Activated B cell treated with CpG ODN at 0.5 μM for 24 hours (primary cell): ENCODE measurements at regions of chr17 and their contacts with region 1.

Region 1: DNA sequence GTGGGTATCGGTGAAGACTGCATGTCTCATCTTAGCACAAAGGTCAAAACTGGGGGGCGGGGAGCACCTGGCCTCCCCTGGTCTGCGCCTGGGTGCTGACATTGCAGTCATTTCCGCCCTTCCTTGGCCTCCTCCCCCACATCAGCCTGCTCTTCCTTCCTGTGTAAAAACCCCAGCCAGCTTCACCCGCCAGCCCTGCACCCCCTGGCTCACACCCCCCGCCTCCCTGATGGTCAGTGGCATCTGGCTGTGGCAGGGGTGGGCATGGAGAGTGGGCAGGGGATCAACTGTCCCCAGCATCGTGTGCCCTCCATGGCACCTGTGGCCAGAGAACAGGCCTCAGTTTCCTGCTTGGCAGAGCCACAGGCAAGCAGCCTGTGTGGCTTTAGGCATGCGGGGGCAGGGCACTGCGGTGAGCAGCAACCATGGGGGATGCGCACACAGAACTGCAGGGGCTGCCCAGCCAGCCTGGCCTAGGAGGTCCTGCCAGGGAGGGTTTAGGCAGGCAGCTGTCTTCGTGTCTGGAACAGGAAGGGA is 26.5 kb upstream of the LASP1NB start:
- DNase-seq: peak; percentile 68
- ATAC-seq: peak; percentile 93
- H3K4me3 Mint-ChIP-seq: peak overlapping the region; percentile 55
- H3K27ac Mint-ChIP-seq: peak overlapping the region; percentile 93
- H3K4me1 Mint-ChIP-seq: peaks cover 42% of the 10 kb centered on the region
- H3K27me3 Mint-ChIP-seq: no peaks in the 10 kb centered on the region
- CTCF ChIP-seq: no peak

Region 2: DNA sequence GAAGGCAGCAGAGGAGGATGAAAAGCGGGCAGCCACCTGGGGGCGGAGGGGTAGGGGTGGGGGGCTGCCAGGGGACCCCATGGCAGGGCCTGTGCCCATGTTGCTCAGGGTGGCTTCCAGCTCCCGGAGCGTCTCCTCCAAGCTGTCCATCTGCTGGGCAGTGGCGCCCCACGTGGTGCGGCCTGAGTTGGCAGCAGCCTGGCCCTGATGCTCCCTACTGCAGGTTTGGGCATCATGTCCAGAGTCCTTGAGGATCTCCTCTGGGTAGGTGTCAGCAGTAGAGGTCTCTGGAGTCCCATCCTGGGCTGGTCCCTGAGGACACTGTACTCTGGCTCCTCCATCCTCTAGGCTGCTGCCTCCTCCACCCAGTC is 354.1 kb before region 1 on chr17:
- CTCF ChIA-PET with region 1: no interaction called
- POLR2A ChIA-PET with region 1: no interaction called
- intact Hi-C with region 1: no loop called
- DNase-seq: no peak
- ATAC-seq: no peak
- H3K4me3 Mint-ChIP-seq: no peak overlapping the region
- H3K27ac Mint-ChIP-seq: no peak overlapping the region
- H3K4me1 Mint-ChIP-seq: no peaks in the 10 kb centered on the region
- H3K27me3 Mint-ChIP-seq: peaks cover 33% of the 10 kb centered on the region
- CTCF ChIP-seq: no peak

Region 3: DNA sequence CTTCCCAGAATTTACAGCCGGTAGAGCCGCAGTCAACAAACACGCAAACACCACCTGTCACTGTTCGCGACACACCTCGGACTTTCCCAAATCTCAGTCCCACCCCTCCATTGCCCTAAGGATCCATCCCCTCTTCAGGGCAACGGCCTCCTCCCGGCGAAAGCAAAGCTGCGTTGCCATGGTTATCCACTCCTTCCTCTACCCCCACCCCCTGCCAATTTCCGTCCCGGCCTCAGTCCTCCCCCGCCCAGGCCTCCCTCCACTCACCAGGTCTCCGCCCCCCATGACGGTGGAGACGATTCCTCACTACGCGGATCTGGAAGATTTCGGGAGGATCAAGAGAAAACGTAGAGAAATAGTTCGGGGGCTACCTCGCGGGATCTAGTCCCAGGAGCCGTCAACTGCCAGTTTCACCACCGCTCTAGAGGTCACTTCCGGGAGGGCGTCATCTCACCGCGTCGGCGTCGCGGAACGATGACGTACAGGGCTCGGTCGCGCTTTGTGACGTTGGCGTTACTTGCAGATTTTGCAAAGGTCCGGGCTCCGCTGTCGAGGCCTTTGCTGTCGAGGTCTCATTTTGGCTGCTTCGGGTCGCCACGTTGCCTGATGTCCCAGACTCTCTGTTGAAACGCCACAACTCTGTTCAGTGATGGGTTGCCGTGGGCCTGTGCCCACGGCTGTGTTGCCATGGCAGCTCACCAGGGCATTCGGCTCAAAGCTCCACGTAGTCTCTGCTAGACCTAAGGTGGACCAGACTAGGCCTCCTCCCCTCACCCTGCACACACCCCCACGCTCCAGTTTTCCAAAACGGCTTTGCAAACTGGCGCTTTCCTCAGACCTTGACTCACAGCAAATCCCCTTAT is 73.8 kb before region 1 on chr17 and contains the start of gene CWC25:
- CTCF ChIA-PET with region 1: no interaction called
- POLR2A ChIA-PET with region 1: interaction called, 9 read pairs
- intact Hi-C with region 1: loop called (anchors 2 kb)
- DNase-seq: peak; percentile 99
- ATAC-seq: peak; percentile 80
- H3K4me3 Mint-ChIP-seq: peak within 1 kb of the TSS; percentile 98
- H3K27ac Mint-ChIP-seq: peak within 1 kb of the TSS; percentile 99
- H3K4me1 Mint-ChIP-seq: peaks cover 29% of the 10 kb centered on the region
- H3K27me3 Mint-ChIP-seq: peaks cover 3% of the 10 kb centered on the region
- CTCF ChIP-seq: no peak
- total RNA-seq, gene CWC25: 35.6 and 38.3 TPM in 2 replicates

Region 4: DNA sequence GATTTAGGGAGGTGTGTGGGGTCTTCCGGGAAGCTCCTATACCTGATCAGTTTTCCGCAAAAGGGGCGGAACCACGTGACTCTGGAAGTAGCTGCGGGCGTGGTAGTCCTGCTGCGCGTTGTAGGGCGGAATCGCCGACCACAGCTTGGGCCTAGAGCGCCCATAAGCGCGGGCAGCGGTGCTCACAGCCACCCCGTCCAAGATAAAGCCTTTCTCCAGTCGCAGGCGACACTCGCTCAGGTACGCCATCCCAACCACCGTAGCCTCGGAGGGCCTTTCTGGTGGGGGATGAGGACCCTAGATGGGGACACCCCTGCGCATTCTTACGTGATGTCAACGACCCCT is 57.8 kb before region 1 on chr17:
- CTCF ChIA-PET with region 1: no interaction called
- POLR2A ChIA-PET with region 1: no interaction called
- intact Hi-C with region 1: no loop called
- DNase-seq: no peak
- ATAC-seq: no peak
- H3K4me3 Mint-ChIP-seq: peak overlapping the region; percentile 41
- H3K27ac Mint-ChIP-seq: no peak overlapping the region
- H3K4me1 Mint-ChIP-seq: no peaks in the 10 kb centered on the region
- H3K27me3 Mint-ChIP-seq: no peaks in the 10 kb centered on the region
- CTCF ChIP-seq: no peak

Region 5: GRCh38 chr17:38853292-38854219 is 45.3 kb before region 1 on chr17 and contains the start of gene RPL23:
- CTCF ChIA-PET with region 1: interaction called, 3 read pairs
- POLR2A ChIA-PET with region 1: interaction called, 85 read pairs
- intact Hi-C with region 1: loop called (anchors 1 kb)
- DNase-seq: peak; percentile 79
- ATAC-seq: peak; percentile 86
- H3K4me3 Mint-ChIP-seq: peak within 1 kb of the TSS; percentile 99
- H3K27ac Mint-ChIP-seq: peak within 1 kb of the TSS; percentile 100
- H3K4me1 Mint-ChIP-seq: peaks cover 43% of the 10 kb centered on the region
- H3K27me3 Mint-ChIP-seq: no peaks in the 10 kb centered on the region
- CTCF ChIP-seq: no peak
- total RNA-seq, gene RPL23: 2,652 and 3,293 TPM in 2 replicates

Region 6: GRCh38 chr17:38912221-38912813 is 13.4 kb after region 1 on chr17:
- CTCF ChIA-PET with region 1: no interaction called
- POLR2A ChIA-PET with region 1: interaction called, 15 read pairs
- intact Hi-C with region 1: no loop called
- DNase-seq: no peak
- ATAC-seq: no peak
- H3K4me3 Mint-ChIP-seq: no peak overlapping the region
- H3K27ac Mint-ChIP-seq: no peak overlapping the region
- H3K4me1 Mint-ChIP-seq: peaks cover 14% of the 10 kb centered on the region
- H3K27me3 Mint-ChIP-seq: no peaks in the 10 kb centered on the region
- CTCF ChIP-seq: no peak

Region 7: GRCh38 chr17:38967290-38967738 is 68.4 kb after region 1 on chr17 and contains the start of gene FBXO47:
- CTCF ChIA-PET with region 1: no interaction called
- POLR2A ChIA-PET with region 1: interaction called, 11 read pairs
- intact Hi-C with region 1: no loop called
- DNase-seq: peak; percentile 64
- ATAC-seq: peak; percentile 99
- H3K4me3 Mint-ChIP-seq: peak within 1 kb of the TSS; percentile 78
- H3K27ac Mint-ChIP-seq: peak within 1 kb of the TSS; percentile 85
- H3K4me1 Mint-ChIP-seq: peaks cover 10% of the 10 kb centered on the region
- H3K27me3 Mint-ChIP-seq: no peaks in the 10 kb centered on the region
- CTCF ChIP-seq: no peak
- total RNA-seq, gene FBXO47: not detected in 2 replicates